CD14-positive monocyte (primary cell): ENCODE measurements at regions of chr1 and their contacts with region 1.

Region 1: DNA sequence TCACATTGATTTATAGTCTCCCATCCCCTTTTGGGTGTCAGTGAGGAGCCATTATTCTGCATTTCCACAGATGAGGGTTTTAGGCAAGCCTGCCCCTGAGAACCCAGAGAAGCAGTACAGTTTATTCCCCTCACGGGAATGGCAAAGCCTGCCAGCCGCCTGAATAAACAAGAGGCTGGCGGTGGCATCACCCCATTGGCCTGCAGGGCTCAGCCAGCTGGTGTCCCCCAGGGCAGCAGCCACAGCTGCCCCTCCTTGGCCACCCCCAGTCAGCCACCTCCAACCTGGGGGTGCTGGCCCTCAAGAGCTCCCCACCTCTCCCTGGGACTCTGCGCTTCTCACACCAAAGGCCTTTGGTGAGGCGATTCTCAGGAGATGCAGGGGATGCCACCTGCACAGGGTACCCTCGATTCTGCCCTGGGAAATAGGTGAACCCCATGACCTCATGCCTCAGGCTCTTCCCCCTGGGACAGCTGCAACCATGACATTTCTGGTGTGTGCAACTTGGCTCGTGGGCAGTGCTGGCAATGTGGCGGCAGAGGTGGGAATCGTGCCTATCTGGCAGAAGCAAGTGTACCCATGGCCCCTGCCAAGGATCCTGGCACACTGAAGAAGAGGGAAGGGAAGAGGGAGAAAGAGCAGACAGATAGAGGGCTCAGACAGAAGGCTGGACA is 14.0 kb downstream of the OLFML2B start:
- DNase-seq: no peak
- H3K4me3 ChIP-seq: no peak overlapping the region
- H3K4me3 Mint-ChIP-seq: no peak overlapping the region
- H3K27ac ChIP-seq: no peak overlapping the region
- H3K27ac Mint-ChIP-seq: no peak overlapping the region
- H3K4me1 ChIP-seq: peaks cover under 1 to 12% of the 10 kb centered on the region in 2 donors
- H3K4me1 Mint-ChIP-seq: peaks cover 11% of the 10 kb centered on the region
- H3K27me3 ChIP-seq: no peaks in the 10 kb centered on the region
- H3K27me3 Mint-ChIP-seq: peaks cover 0 to 5% (median 1%) of the 10 kb centered on the region in 3 donors
- CTCF ChIP-seq: no peak

Region 2: GRCh38 chr1:162028726-162029125 is 19.1 kb after region 1 on chr1:
- intact Hi-C with region 1: no loop called
- DNase-seq: peak; percentile 90 to 96 (median 93)
- H3K4me3 ChIP-seq: no peak overlapping the region
- H3K4me3 Mint-ChIP-seq: peak overlapping the region in 1 of 2 donors; percentile 21
- H3K27ac ChIP-seq: peak overlapping the region; percentile 41 to 58
- H3K27ac Mint-ChIP-seq: peak overlapping the region; percentile 69 to 87 (median 81)
- H3K4me1 ChIP-seq: peaks cover 18 to 25% of the 10 kb centered on the region in 2 donors
- H3K4me1 Mint-ChIP-seq: peaks cover 29% of the 10 kb centered on the region
- H3K27me3 ChIP-seq: peaks cover 7 to 26% of the 10 kb centered on the region in 2 donors
- H3K27me3 Mint-ChIP-seq: peaks cover 17 to 43% (median 31%) of the 10 kb centered on the region in 3 donors
- CTCF ChIP-seq: no peak

Region 3: GRCh38 chr1:162046921-162047320 is 37.3 kb after region 1 on chr1:
- intact Hi-C with region 1: loop called in 1 of 2 experiments (anchors 5 kb)
- DNase-seq: no peak
- H3K4me3 ChIP-seq: no peak overlapping the region
- H3K4me3 Mint-ChIP-seq: no peak overlapping the region
- H3K27ac ChIP-seq: no peak overlapping the region
- H3K27ac Mint-ChIP-seq: no peak overlapping the region
- H3K4me1 ChIP-seq: no peaks in the 10 kb centered on the region
- H3K4me1 Mint-ChIP-seq: peaks cover 3% of the 10 kb centered on the region
- H3K27me3 ChIP-seq: no peaks in the 10 kb centered on the region
- H3K27me3 Mint-ChIP-seq: peaks cover 0 to 3% (median 1%) of the 10 kb centered on the region in 3 donors
- CTCF ChIP-seq: no peak

Region 4: DNA sequence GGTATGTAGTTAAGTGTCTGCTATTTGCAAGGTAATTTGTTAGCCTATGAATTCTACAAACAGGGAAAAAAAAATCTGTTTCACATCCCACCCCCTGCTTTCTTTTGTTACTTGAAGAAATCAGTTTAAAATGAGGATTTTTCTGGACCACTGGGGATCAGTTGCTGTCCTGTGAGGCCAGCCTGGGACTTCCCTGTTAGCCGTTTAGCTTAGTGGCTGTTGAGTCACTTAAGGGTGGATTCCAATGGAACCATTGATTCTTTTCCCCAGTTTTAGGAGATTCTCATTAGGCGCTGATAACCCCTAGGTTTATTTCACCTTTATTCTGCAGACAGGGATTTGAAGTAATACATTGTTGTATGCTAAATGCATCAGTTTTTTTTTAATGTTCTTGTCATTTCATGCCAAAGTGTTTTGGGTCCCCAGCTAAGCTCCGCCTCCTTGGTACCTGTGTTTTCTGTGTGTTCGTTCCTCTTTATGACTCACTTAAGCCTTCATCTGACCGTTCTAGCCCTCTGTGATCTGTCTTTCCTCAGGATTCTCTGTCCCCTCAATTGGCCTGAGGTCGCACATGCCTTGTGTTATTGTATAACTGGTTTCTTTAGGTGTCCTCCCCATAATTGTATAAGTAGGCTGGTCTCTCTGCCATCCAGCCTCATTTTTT is 119.2 kb after region 1 on chr1:
- intact Hi-C with region 1: no loop called
- DNase-seq: no peak
- H3K4me3 ChIP-seq: no peak overlapping the region
- H3K4me3 Mint-ChIP-seq: no peak overlapping the region
- H3K27ac ChIP-seq: no peak overlapping the region
- H3K27ac Mint-ChIP-seq: no peak overlapping the region
- H3K4me1 ChIP-seq: no peaks in the 10 kb centered on the region
- H3K4me1 Mint-ChIP-seq: no peaks in the 10 kb centered on the region
- H3K27me3 ChIP-seq: no peaks in the 10 kb centered on the region
- H3K27me3 Mint-ChIP-seq: peaks cover 5 to 9% (median 6%) of the 10 kb centered on the region in 3 donors
- CTCF ChIP-seq: no peak